ENCODE measurements at regions of chr17 and their contacts with region 1.

Region 1: DNA sequence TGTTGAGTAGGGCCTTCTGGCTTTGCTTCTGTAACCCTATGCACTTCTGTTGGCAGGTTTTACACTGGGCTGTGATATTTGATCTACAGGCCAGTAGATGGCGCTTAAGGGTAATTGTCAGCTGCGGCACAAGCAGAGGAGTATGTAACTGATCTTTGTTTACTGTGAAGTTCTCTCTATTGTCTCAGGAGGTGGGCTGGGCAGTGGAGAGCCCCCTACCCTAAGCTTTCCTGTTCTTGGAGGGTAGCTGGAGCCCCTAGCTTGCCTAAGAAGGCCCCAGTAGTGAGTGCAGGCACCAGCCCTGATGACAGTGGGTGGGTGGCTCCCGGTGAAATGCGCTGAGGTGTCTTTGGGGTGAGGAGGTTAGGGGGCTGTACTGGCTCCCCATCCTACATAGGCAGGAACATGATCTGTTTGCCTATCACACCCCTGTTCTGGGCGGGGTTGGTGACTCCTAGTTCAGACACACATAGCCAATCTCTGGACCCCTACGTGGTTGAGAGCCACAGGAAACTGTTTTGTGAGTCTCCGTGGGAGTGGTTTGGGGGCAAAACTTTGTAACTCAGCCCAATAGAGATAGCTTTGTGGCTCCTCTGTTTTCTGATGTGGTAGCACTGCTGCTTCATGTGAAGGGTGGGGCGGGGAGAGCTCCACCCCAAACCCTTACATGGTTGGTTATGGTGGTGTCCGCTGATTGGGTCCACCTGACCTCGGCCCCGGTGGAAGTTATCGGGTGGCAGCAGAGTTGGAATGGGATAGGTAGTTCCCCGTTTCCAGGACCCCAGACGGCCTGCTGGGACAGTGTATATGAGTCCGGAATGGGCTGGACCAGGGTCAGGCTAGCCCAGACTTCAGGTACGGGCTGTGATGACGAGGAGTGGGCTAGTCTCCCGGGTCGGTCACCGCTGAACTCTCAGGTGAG is 60.4 kb downstream of the SLFN11 start:
- DNase-seq: peak; percentile 86
- ATAC-seq: peak; percentile 82
- H3K4me3 ChIP-seq: peak overlapping the region; percentile 19 to 77 (median 50)
- H3K4me3 Mint-ChIP-seq: peak overlapping the region; percentile 94
- H3K27ac ChIP-seq: peak overlapping the region; percentile 2 to 36
- H3K27ac Mint-ChIP-seq: peak overlapping the region; percentile 92
- H3K4me1 ChIP-seq: peaks cover 8 to 17% of the 10 kb centered on the region in 2 donors
- H3K4me1 Mint-ChIP-seq: peaks cover 18% of the 10 kb centered on the region
- H3K27me3 ChIP-seq: peaks cover 0 to 4% (median 0%) of the 10 kb centered on the region in 4 experiments
- H3K27me3 Mint-ChIP-seq: no peaks in the 10 kb centered on the region
- CTCF ChIP-seq: peak; percentile 86

Region 2: DNA sequence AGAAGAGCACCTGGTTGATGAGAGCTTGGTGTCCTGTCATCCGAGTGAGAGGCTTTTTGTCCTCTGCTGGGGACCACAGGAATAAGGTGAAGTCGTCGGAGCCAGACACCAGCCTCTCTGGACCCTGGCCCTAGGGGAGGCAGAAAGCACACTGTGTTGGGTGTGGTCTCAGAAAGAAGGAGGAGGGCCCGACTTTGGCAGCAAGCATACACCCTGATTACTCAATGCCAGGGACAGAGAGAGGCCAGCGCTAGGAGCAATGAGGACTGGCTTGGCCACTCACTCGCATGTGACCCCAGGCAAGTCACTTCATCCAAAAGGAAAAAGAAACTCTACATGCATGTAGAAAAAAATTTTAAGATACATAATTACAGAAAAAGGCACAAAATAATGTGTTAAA is 177.7 kb before region 1 on chr17:
- CTCF ChIA-PET with region 1: no interaction called
- POLR2A ChIA-PET with region 1: no interaction called
- intact Hi-C with region 1: no loop called
- DNase-seq: no peak
- ATAC-seq: no peak
- H3K4me3 ChIP-seq: no peak overlapping the region
- H3K4me3 Mint-ChIP-seq: no peak overlapping the region
- H3K27ac ChIP-seq: no peak overlapping the region
- H3K27ac Mint-ChIP-seq: no peak overlapping the region
- H3K4me1 ChIP-seq: no peaks in the 10 kb centered on the region
- H3K4me1 Mint-ChIP-seq: no peaks in the 10 kb centered on the region
- H3K27me3 ChIP-seq: no peaks in the 10 kb centered on the region
- H3K27me3 Mint-ChIP-seq: no peaks in the 10 kb centered on the region
- CTCF ChIP-seq: no peak

Region 3: DNA sequence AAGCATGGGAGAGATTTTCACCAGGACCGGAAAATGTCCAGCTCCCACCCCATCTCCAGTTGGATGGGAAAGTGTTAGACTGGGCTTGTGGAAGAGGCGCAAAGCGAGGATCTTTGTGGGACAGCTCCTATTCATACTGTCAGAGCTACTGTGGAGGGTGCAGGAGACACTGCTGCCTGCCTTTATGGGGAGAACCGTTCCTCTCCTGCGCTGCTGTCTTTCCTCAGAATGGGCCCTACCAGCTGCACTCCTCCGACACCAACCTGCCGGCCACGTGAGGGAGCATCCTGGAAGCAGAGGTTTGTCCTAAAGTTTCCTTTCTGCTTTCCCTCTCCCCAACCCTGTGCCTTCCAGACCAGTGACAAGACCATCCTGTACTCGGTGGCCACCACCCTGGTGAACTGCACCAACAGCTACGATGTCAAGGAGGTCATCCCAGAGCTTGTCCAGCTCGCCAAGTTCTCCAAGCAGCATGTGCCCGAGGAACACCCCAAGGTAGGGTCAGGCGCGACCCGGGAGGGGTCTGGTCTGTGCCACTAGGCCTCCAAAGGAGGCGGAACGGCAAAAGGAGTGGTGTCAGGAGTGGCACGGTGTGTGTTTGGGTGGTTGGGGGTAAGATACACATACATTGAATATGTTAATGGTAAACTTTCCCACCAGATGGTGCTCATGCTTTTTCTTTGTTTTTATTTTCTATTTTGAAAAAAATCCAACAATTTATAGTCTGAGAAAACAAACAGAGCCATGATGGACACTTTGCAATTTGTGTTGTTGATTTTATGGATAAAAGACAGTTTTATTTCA is 141.9 kb before region 1 on chr17:
- CTCF ChIA-PET with region 1: interaction called, 3 read pairs
- POLR2A ChIA-PET with region 1: no interaction called
- intact Hi-C with region 1: loop called (anchors 2 kb)
- DNase-seq: peak; percentile 28
- ATAC-seq: peak; percentile 31
- H3K4me3 ChIP-seq: no peak overlapping the region
- H3K4me3 Mint-ChIP-seq: no peak overlapping the region
- H3K27ac ChIP-seq: no peak overlapping the region
- H3K27ac Mint-ChIP-seq: no peak overlapping the region
- H3K4me1 ChIP-seq: no peaks in the 10 kb centered on the region
- H3K4me1 Mint-ChIP-seq: no peaks in the 10 kb centered on the region
- H3K27me3 ChIP-seq: peaks cover 0 to 9% (median 0%) of the 10 kb centered on the region in 4 experiments
- H3K27me3 Mint-ChIP-seq: peaks cover 28% of the 10 kb centered on the region
- CTCF ChIP-seq: peak; percentile 63

Region 4: DNA sequence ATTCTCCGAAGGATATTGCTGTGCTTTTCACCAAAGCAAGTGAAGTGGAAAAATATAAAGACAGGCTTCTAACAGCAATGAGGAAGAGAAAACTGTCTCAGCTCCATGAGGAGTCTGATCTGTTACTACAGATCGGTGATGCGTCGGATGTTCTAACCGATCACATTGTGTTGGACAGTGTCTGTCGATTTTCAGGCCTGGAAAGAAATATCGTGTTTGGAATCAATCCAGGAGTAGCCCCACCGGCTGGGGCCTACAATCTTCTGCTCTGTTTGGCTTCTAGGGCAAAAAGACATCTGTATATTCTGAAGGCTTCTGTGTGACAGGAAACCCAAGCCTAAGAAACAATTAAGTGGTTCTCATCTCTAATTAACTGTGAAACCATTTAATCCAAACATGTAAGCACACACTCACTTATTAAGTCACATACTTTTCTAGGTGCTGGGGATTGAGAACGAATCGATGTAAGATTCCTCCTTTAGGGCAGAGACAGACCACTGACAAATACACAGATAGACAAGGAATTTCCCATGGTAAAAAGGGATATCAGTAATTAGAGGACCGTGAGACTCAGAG is 47.4 kb before region 1 on chr17:
- CTCF ChIA-PET with region 1: no interaction called
- POLR2A ChIA-PET with region 1: no interaction called
- intact Hi-C with region 1: no loop called
- DNase-seq: no peak
- ATAC-seq: no peak
- H3K4me3 ChIP-seq: no peak overlapping the region
- H3K4me3 Mint-ChIP-seq: no peak overlapping the region
- H3K27ac ChIP-seq: no peak overlapping the region
- H3K27ac Mint-ChIP-seq: no peak overlapping the region
- H3K4me1 ChIP-seq: no peaks in the 10 kb centered on the region
- H3K4me1 Mint-ChIP-seq: no peaks in the 10 kb centered on the region
- H3K27me3 ChIP-seq: peaks cover 0 to 5% (median 0%) of the 10 kb centered on the region in 4 experiments
- H3K27me3 Mint-ChIP-seq: no peaks in the 10 kb centered on the region
- CTCF ChIP-seq: no peak

Region 5: GRCh38 chr17:35373534-35373983 is 60.5 kb after region 1 on chr17 and contains the start of gene SLFN11:
- CTCF ChIA-PET with region 1: interaction called, 22 read pairs
- POLR2A ChIA-PET with region 1: interaction called, 5 read pairs
- intact Hi-C with region 1: loop called (anchors 2 kb)
- DNase-seq: peak; percentile 85
- ATAC-seq: peak; percentile 77
- H3K4me3 ChIP-seq: peak within 1 kb of the TSS; percentile 18 to 87 (median 72)
- H3K4me3 Mint-ChIP-seq: peak within 1 kb of the TSS; percentile 96
- H3K27ac ChIP-seq: peak within 1 kb of the TSS; percentile 79 to 85
- H3K27ac Mint-ChIP-seq: peak within 1 kb of the TSS; percentile 99
- H3K4me1 ChIP-seq: peaks cover 7 to 8% of the 10 kb centered on the region in 2 donors
- H3K4me1 Mint-ChIP-seq: peaks cover 49% of the 10 kb centered on the region
- H3K27me3 ChIP-seq: no peaks in the 10 kb centered on the region
- H3K27me3 Mint-ChIP-seq: no peaks in the 10 kb centered on the region
- CTCF ChIP-seq: no peak
- total RNA-seq, gene SLFN11: 48.1 and 52.2 TPM in 2 replicates

Region 6: GRCh38 chr17:35448214-35448898 is 135.3 kb after region 1 on chr17 and contains the start of gene SLFN13:
- CTCF ChIA-PET with region 1: interaction called, 20 read pairs
- POLR2A ChIA-PET with region 1: no interaction called
- intact Hi-C with region 1: loop called (anchors 5 kb)
- DNase-seq: peak; percentile 87
- ATAC-seq: peak; percentile 84
- H3K4me3 ChIP-seq: peak within 1 kb of the TSS; percentile 48 to 90 (median 83)
- H3K4me3 Mint-ChIP-seq: peak within 1 kb of the TSS; percentile 93
- H3K27ac ChIP-seq: peak within 1 kb of the TSS; percentile 79 to 84
- H3K27ac Mint-ChIP-seq: peak within 1 kb of the TSS; percentile 87
- H3K4me1 ChIP-seq: peaks cover 14 to 26% of the 10 kb centered on the region in 2 donors
- H3K4me1 Mint-ChIP-seq: peaks cover 25% of the 10 kb centered on the region
- H3K27me3 ChIP-seq: no peaks in the 10 kb centered on the region
- H3K27me3 Mint-ChIP-seq: no peaks in the 10 kb centered on the region
- CTCF ChIP-seq: no peak
- total RNA-seq, gene SLFN13: 30.9 and 31.0 TPM in 2 replicates

Region 7: DNA sequence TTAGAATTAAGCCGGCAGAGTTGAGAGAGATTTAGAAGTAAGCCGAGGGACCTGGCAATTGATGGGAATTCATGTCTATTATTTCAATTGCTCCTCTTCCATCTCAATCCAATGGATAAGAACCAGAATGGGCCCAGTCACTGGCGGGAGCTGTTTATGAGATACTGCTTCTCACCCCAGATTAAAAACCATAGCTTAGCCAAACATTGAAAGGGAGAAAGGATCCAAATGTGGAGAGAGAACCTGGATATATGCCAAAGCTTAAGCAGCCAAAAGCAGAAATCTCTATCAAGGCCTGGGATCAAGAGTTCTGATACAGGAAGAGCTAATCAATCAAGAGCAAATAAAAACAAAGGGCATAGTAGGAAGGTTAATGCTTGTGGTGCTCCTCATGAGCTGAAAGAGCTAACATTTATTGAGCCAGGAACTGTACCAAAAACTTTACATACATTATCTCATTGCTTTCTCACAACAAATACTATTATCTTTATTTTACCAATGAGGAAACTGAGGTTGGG is 221.6 kb after region 1 on chr17:
- CTCF ChIA-PET with region 1: interaction called, 360 read pairs
- POLR2A ChIA-PET with region 1: interaction called, 12 read pairs
- intact Hi-C with region 1: loop called (anchors 1 kb)
- DNase-seq: no peak
- ATAC-seq: no peak
- H3K4me3 ChIP-seq: no peak overlapping the region
- H3K4me3 Mint-ChIP-seq: no peak overlapping the region
- H3K27ac ChIP-seq: no peak overlapping the region
- H3K27ac Mint-ChIP-seq: no peak overlapping the region
- H3K4me1 ChIP-seq: peaks cover 3 to 5% of the 10 kb centered on the region in 2 donors
- H3K4me1 Mint-ChIP-seq: peaks cover 18% of the 10 kb centered on the region
- H3K27me3 ChIP-seq: no peaks in the 10 kb centered on the region
- H3K27me3 Mint-ChIP-seq: no peaks in the 10 kb centered on the region
- CTCF ChIP-seq: no peak

Region 8: DNA sequence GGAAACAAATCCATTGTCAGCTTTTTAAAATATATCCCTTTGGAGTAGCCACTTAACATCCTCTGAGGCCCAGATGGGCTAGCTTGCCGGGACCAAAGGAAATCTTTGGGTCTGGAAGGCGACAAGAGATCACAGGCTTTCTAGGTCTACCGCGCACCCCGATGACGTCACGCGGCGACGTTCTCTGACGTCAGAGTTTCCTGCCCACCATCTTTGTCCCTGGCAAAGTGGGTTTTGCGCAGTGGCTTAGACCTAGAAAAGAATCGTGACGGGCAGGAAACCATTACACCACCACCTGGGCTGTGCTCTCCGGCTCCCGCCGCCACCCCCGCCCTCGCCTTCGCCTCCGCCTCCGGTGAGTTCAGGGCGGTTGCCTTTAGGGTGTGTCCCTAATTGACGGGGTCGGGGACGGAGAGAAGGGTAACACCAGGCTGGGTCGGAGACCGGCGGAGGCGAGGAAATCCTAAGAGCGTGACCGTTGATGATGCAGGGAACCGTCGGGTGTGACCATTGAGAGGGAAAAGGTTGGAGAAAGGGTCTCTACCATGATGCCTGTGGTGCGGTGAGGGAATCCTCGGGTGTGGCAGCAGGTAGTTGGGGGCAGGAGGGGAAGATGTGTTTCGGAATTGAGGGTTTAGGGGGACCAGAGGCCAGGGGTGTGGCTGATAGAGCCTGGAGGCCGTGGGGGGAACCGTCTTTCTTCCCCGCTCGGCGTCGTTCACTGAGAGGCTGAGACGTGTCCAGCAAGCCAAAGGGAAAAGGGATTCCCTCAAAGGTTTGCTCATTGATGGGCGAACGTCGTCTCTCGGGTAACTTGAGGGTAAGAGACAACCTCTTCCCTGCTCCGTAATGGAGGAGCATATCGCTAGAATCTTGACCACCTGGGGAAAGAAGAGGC is 274.3 kb after region 1 on chr17 and contains the start of gene AP2B1:
- CTCF ChIA-PET with region 1: no interaction called
- POLR2A ChIA-PET with region 1: no interaction called
- intact Hi-C with region 1: loop called (anchors 1 kb)
- DNase-seq: peak; percentile 99
- ATAC-seq: peak; percentile 98
- H3K4me3 ChIP-seq: peak within 1 kb of the TSS; percentile 59 to 100 (median 90)
- H3K4me3 Mint-ChIP-seq: peak within 1 kb of the TSS; percentile 92
- H3K27ac ChIP-seq: peak within 1 kb of the TSS; percentile 83 to 89
- H3K27ac Mint-ChIP-seq: peak within 1 kb of the TSS; percentile 95
- H3K4me1 ChIP-seq: peaks cover 11 to 19% of the 10 kb centered on the region in 2 donors
- H3K4me1 Mint-ChIP-seq: peaks cover 33% of the 10 kb centered on the region
- H3K27me3 ChIP-seq: no peaks in the 10 kb centered on the region
- H3K27me3 Mint-ChIP-seq: peaks cover 7% of the 10 kb centered on the region
- CTCF ChIP-seq: no peak
- total RNA-seq, gene AP2B1: 120 and 123 TPM in 2 replicates

Measured in B cell (primary cell).